ENCODE measurements at regions of chr3 and their contacts with region 1.

Region 1: DNA sequence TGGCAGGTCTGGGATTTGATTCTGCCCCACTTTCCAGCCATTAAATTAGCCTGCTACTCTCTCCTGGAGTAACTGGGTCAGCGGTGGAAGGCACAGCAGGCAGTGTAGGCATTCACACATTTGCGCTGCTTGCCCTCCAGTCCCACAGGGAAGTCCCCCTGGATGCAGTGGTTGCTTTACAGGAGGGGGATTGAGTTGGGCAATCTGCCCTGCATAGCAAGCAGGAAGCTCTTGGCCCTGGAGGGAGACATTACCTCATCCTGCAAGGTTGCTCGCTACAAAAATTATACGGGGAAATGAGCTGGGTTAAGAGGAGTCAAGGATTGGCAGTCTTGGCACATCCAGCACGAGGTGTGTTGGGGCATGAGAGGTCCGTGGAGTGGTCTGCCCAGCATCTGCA is 14.8 kb downstream of the MCM2 start:
- DNase-seq: no peak
- H3K4me3 ChIP-seq: no peak overlapping the region
- H3K27ac ChIP-seq: no peak overlapping the region
- H3K4me1 ChIP-seq: no peaks in the 10 kb centered on the region
- H3K27me3 ChIP-seq: no peaks in the 10 kb centered on the region
- CTCF ChIP-seq: no peak
- EP300 ChIP-seq: no peak
- POLR2A ChIP-seq: 0 out of 3 replicates have a peak, but pooled peaks of 1 of the 2 experiments have one; percentile 16
- RAD21 ChIP-seq: no peak

Region 2: DNA sequence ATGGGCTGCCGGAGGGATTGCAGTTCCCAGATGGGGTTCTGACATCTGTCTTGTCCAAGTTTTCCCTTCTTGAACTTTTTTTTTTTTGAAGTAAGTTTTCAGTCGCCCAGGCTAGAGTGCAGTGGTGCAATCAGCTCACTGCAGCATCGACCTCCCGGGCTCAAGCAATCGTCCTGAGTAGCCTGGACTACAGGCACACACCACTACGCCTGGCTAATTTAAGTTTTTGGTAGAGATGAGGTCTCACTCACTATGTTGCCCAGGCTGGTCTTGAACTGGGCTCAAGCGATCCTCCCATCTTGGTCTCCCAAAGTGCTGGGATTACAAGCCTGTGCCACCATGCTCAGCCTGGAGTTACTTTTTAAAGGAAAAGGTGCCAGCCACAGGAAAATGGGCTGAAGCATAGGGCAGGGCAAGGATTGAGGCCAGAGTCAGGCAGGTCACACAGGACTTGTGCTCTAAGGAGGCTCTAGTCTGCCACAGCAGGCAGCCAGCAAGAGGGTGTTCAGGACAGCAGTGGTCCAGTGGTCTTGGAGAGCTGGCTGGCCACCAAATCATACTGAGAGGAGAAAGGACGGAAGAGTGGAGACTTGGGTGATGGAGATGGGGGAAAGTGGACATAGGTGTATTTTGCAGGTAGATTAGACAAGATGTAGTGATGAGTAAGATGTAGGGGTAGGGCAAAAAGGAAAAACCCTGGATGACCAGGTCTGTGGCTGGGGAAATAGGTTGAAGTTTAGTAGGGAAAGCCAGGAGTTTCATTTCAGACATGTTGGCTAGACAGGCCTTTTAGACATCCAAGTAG is 10.0 kb after region 1 on chr3:
- CTCF ChIA-PET with region 1: interaction called, 3 read pairs
- POLR2A ChIA-PET with region 1: interaction called, 182 read pairs
- DNase-seq: no peak
- H3K4me3 ChIP-seq: no peak overlapping the region
- H3K27ac ChIP-seq: no peak overlapping the region
- H3K4me1 ChIP-seq: no peaks in the 10 kb centered on the region
- H3K27me3 ChIP-seq: peaks cover 3 to 14% (median 10%) of the 10 kb centered on the region in 4 experiments
- CTCF ChIP-seq: no peak
- EP300 ChIP-seq: no peak
- POLR2A ChIP-seq: no peak
- RAD21 ChIP-seq: no peak

Region 3: DNA sequence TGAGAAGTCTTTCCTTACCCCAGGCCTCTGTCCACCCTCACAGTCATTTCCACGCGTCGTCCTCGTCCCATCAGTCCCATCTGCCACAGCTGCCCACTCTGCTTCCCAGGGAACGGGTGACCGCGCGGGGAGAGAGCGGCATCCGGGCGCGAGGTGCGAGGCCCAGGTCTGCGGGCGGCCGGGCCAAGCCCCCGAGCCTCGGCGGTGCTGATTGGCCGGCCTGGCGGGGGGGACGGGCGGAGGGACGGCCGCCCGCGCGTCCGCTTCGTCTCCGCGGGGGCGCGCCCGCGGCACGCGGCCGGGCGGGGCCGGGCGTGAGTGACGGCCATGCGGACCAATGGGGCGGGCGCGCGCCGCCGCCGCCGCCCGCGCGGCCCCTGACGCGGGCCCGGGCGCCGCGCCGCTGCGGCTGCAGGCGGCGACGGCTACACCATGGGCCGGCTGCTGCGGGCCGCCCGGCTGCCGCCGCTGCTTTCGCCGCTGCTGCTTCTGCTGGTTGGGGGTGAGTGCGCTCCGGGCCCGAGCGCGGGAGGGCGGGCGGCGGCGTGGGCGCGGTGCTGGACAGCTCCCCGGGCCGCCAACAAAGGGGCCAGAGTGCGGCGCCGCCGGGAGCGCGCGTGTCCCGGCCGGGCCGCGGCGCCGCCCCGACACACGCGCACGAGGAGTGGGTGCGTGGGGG is 16.0 kb after region 1 on chr3 and contains the start of gene PODXL2:
- CTCF ChIA-PET with region 1: interaction called, 3 read pairs
- POLR2A ChIA-PET with region 1: interaction called, 182 read pairs
- DNase-seq: peak; percentile 13 to 76
- H3K4me3 ChIP-seq: peak within 1 kb of the TSS; percentile 44 to 72 (median 56)
- H3K27ac ChIP-seq: no peak within 1 kb of the TSS
- H3K4me1 ChIP-seq: peaks cover 0 to 7% (median 3%) of the 10 kb centered on the region in 4 experiments; a peak in 5 of 7 replicates
- H3K27me3 ChIP-seq: peaks cover 13 to 34% (median 29%) of the 10 kb centered on the region in 4 experiments
- CTCF ChIP-seq: no peak
- EP300 ChIP-seq: no peak
- POLR2A ChIP-seq: no peak
- RAD21 ChIP-seq: no peak
- total RNA-seq, gene PODXL2: 31.4 and 31.6 TPM in 2 replicates